Activated T-helper 1 cell treated with anti-CD3 and anti-CD28 coated beads, Interleukin-12 subunit alpha, Interleukin-12 subunit beta, Interleukin-2, Interleukin-4 antibody, amounts not matched to agents 30 ng/mL and 10 ng/mL and 1 ng/mL, durations not matched to agents 14 hours and 24 hours and 36 hours (primary cell): ENCODE measurements at regions of chr2 and their contacts with region 1.

Region 1: DNA sequence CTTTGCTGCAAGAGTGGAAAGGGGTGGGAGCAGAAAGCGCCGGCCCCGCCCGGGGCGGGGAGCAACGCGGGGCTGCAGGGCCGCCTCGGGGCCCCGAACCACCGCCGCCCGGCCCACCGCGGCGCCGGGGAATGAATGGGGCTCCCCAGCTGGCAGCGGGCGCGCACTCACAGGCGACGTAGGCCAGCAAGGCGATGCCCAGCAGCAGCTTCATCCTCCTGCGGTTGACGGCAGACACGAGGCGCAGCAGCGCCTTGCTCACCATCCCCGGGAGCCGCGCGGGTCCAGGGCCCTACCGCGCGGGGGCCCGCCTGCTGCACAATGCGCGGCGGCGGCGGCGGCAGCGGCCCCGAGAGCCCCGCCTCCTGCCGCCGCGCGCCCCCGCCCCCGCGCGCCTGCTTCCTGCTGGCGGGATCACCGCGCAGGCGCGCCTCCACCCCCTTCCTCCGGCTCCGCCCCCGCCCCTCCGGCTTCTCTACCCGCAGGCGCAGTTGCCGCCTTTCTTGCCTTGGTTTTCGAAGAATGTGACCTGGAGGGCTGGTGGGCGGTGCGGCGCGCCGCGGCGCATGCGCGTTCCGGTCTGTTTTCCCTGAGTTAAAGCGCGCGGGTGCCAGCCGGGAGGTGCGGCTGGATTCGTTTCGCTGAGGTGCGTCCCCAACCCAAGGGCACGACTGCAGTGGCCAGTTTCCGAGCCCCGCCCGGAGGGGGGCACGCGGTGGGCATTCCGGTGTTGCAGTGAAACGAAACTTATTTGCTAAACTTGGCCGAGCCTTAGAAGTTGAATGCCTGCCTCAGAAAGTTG is at the start of gene UXS1:
- DNase-seq: peak; percentile 95
- H3K4me3 Mint-ChIP-seq: peak within 1 kb of the TSS; percentile 86
- H3K27ac Mint-ChIP-seq: peak within 1 kb of the TSS; percentile 92
- H3K4me1 Mint-ChIP-seq: peaks cover 46% of the 10 kb centered on the region
- H3K27me3 Mint-ChIP-seq: peaks cover 5% of the 10 kb centered on the region
- total RNA-seq, gene UXS1: 36.7 TPM in 2 replicates

Region 2: DNA sequence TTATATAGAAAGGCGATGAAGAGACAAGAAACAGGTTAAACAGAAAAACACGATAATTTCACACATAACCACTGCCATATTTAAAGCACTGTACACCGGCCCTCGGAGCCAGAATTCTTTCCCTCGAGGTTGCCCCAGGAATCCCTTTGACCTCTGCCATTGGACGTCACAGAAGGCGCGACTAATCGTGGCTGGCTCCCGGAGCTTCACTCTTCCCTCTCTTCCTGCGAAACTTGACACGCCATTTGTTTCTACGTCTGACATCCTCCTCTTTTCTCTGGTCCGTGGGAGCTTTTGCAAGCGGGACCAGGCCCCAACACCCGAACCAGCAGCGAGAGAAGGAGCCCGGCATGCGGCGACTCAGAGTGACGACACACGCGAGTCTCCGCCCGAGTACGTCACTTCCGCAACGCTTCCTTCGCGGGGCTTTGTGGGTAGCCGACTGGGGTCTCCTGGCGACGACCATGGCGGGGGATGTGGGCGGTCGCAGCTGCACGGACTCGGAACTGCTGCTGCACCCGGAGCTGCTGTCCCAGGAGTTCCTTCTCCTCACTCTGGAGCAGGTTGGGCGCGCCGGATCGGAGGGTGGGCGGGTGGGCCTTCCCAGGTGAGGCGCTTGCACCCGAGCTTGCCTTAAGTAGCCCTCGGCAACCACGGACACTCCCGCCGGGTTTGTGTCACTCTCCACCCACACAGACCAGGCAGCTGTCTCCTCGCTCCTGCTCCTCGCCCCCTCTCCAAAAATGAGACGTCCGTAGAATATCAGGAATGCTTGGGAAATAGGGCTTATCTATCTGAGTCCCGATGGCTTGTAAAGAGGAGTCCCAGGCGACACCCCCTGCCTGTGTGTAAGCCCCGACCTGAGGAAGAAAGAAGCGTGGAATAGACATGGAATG is 856.8 kb before region 1 on chr2 and contains the start of gene C2orf49:
- intact Hi-C with region 1: loop called (anchors 5 kb)
- DNase-seq: peak; percentile 85
- H3K4me3 Mint-ChIP-seq: peak within 1 kb of the TSS; percentile 100
- H3K27ac Mint-ChIP-seq: peak within 1 kb of the TSS; percentile 100
- H3K4me1 Mint-ChIP-seq: peaks cover 50% of the 10 kb centered on the region
- H3K27me3 Mint-ChIP-seq: no peaks in the 10 kb centered on the region
- total RNA-seq, gene C2orf49: 18.5 and 23.4 TPM in 2 replicates

Region 3: GRCh38 chr2:106085181-106085940 is 108.8 kb before region 1 on chr2:
- intact Hi-C with region 1: loop called (anchors 5 kb)
- DNase-seq: peak; percentile 41
- H3K4me3 Mint-ChIP-seq: peak overlapping the region; percentile 38
- H3K27ac Mint-ChIP-seq: peak overlapping the region; percentile 76
- H3K4me1 Mint-ChIP-seq: peaks cover 18% of the 10 kb centered on the region
- H3K27me3 Mint-ChIP-seq: no peaks in the 10 kb centered on the region

Region 4: GRCh38 chr2:106140913-106141312 is 53.3 kb before region 1 on chr2:
- intact Hi-C with region 1: loop called (anchors 1 kb)
- DNase-seq: no peak
- H3K4me3 Mint-ChIP-seq: peak overlapping the region; percentile 5
- H3K27ac Mint-ChIP-seq: peak overlapping the region; percentile 81
- H3K4me1 Mint-ChIP-seq: peaks cover 70% of the 10 kb centered on the region
- H3K27me3 Mint-ChIP-seq: no peaks in the 10 kb centered on the region

Region 5: DNA sequence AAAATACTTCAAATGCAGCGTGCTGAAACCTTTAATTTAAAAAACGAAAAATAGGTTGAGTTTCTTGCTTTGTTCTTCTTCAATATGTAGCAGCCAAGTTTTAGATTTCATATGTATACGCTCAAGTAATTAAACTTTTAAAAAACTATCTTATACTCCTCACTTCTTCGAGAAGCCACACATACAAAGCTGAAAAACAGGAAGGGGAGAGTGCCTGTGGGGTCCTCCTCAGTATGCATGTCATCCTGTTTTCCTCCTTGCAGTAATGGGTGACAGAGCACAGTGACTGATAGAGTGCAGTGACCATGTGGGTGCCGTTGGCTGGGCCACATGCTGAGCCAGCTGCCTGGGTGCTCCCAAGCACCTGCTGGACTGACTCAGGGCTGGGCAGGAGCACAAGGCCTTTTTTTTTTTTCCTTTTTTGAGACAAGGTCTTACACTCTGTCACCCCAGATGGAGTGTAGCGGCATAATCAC is 33.4 kb before region 1 on chr2:
- intact Hi-C with region 1: loop called (anchors 1 kb)
- DNase-seq: peak; percentile 22
- H3K4me3 Mint-ChIP-seq: peak overlapping the region; percentile 85
- H3K27ac Mint-ChIP-seq: peak overlapping the region; percentile 91
- H3K4me1 Mint-ChIP-seq: peaks cover 74% of the 10 kb centered on the region
- H3K27me3 Mint-ChIP-seq: no peaks in the 10 kb centered on the region